ENCODE measurements at regions of chr1 and their contacts with region 1.

Region 1: GRCh38 chr1:8604041-8604945 is 213.1 kb downstream of the RERE start:
- DNase-seq: peak; percentile 73
- H3K4me3 Mint-ChIP-seq: peak overlapping the region; percentile 67
- H3K27ac Mint-ChIP-seq: peak overlapping the region; percentile 97
- H3K4me1 Mint-ChIP-seq: peaks cover 49% of the 10 kb centered on the region
- H3K27me3 Mint-ChIP-seq: no peaks in the 10 kb centered on the region

Region 2: DNA sequence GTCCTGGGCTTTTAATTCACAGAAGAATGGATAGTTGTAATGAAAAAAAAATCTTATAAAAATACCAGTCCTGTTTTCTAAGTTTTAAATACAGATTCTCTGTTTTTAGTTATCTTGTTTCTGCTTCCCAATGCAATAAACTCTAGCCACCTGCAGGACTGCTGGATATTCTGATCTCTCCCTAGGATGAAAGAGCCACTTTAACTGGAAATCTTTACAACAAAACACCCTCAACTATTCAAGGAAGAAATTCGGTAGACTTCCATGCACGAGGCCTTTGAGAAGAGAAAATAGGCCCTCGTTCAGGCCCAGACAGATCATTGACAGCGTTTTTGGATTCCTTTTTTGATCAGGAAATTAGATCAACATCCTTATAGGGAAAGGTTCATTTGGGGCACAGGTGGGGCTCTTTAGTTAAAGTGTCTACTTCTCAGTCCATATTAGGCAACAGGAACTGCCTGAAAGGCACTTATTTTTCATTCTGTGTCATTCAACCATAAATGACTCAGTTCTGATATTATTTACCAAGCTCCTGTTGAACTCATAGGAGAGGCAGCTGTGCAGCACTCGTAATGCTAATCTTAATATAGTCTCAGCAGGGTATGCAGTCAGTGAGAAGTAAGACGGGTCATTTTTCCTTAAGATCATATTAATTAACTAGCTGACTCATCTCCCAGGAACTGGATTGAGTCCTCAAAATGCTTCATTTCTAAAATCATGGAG is 507.1 kb before region 1 on chr1:
- CTCF ChIA-PET with region 1: no interaction called
- intact Hi-C with region 1: loop called (anchors 2 kb)
- DNase-seq: peak; percentile 53
- H3K4me3 Mint-ChIP-seq: no peak overlapping the region
- H3K27ac Mint-ChIP-seq: peak overlapping the region; percentile 81
- H3K4me1 Mint-ChIP-seq: peaks cover 36% of the 10 kb centered on the region
- H3K27me3 Mint-ChIP-seq: peaks cover 17% of the 10 kb centered on the region

Region 3: DNA sequence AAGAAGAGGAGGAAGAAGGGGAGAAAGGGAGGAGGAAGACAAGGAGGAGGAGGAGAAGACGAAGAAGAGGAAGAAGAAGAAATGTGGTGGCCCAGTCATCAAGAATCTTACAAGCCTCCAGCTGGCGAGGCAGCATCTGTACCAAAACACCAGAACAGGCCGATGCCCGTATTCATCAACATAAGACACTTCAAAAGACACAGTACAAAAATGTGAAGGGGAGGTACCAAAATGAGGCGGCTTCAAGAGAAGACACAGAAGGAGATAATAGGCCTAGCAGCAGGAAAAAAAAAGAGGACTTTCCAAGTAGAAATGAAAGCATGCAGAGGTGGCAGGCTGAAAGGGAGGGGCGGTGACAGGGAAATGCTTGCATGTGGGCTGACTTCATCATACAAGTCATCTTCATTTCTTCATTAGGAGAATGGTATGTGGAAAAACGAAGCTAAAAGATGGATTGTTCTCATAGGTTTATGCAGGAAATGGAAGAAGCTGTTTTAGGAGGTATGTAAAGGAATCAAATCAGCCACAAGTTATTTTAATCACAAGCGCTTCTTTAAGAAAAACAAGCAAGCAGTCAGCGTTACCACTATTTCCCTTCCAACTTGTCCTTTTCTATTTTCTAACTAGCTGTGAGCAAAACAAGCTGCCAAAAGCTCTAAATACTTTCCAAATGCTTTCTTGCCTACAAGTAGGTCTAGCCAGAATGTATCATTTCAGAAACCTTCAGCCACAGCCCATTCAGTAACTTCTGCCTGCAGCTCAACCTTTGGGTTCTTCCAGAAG is 94.1 kb before region 1 on chr1:
- CTCF ChIA-PET with region 1: no interaction called
- intact Hi-C with region 1: loop called (anchors 2 kb)
- DNase-seq: peak; percentile 81
- H3K4me3 Mint-ChIP-seq: peak overlapping the region; percentile 54
- H3K27ac Mint-ChIP-seq: peak overlapping the region; percentile 93
- H3K4me1 Mint-ChIP-seq: peaks cover 46% of the 10 kb centered on the region
- H3K27me3 Mint-ChIP-seq: no peaks in the 10 kb centered on the region

Region 4: DNA sequence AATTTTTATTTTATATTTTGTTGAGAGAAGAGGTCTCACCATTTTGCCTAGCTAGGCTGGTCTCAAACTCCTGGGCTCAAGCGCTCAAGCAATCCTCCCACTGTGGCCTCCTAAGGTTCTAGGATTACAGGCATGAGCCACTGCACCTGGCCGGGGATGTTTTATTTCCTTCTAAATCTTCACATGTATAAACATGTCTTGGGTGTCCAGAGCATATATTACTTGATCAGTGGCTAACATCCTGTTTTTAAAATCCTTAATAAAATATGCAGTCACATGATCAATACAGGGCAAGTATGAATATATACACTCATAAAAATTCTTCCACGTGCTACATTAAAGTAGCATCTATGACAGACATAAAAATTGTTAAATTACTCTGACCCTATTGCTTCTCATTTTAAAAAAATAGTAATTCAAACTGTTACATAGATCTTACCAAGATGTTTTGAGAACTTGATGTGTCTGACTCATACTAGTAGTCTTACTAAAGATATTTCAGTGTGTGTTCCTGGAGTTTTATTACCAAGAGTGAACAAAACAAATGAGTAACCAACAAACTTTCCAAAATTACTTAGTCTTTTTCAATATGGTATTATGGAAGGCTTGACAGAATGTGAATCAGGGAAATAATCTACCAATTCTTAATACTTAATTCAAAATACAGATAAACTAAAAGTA is 63.9 kb before region 1 on chr1:
- CTCF ChIA-PET with region 1: no interaction called
- intact Hi-C with region 1: loop called (anchors 1 kb)
- DNase-seq: no peak
- H3K4me3 Mint-ChIP-seq: no peak overlapping the region
- H3K27ac Mint-ChIP-seq: peak overlapping the region; percentile 56
- H3K4me1 Mint-ChIP-seq: peaks cover 32% of the 10 kb centered on the region
- H3K27me3 Mint-ChIP-seq: no peaks in the 10 kb centered on the region

Region 5: DNA sequence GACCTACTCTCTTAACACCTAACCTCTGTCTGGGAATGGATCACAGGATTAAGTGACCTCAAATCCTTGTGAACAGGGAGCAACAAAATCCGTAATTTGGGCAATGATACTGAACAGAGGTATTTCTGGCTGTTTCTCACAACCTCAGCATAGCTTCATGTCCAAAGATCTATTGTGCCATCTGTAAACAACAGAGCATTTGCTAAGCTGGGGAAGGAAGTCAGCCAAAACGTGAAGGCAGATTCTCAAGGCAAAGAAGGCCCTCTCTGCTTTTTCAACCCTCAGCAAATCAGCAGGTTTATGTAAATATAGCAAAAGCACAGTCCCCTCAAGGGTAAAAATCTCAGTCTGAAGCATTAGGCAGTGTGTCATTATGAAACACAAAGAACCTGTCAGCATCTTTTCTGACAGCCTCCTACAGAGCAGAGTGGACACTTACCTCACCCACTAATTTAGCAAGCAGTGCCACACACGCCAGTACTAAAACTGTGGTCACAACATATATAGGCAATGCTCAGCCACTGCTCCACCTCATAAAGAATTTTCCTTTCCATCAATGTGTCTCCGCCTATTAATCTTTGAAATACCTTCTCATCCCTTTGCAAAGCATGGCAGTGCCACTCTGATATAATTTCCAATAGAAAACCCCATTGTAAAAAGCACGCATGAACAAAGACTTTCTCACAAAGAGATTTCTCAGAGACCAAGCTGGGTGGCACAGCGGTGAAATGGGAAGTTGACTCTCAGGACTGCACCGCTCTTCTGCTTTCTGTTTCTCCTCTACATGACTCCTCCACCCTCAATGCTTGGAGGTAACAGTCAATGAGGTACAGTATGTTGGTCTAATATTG is 25.2 kb after region 1 on chr1:
- CTCF ChIA-PET with region 1: interaction called, 4 read pairs
- intact Hi-C with region 1: loop called (anchors 2 kb)
- DNase-seq: peak; percentile 37
- H3K4me3 Mint-ChIP-seq: no peak overlapping the region
- H3K27ac Mint-ChIP-seq: no peak overlapping the region
- H3K4me1 Mint-ChIP-seq: peaks cover 58% of the 10 kb centered on the region
- H3K27me3 Mint-ChIP-seq: no peaks in the 10 kb centered on the region

Region 6: GRCh38 chr1:8660411-8660828 is 56.1 kb after region 1 on chr1:
- CTCF ChIA-PET with region 1: no interaction called
- intact Hi-C with region 1: loop called (anchors 1 kb)
- DNase-seq: no peak
- H3K4me3 Mint-ChIP-seq: no peak overlapping the region
- H3K27ac Mint-ChIP-seq: no peak overlapping the region
- H3K4me1 Mint-ChIP-seq: peaks cover 9% of the 10 kb centered on the region
- H3K27me3 Mint-ChIP-seq: no peaks in the 10 kb centered on the region

Region 7: GRCh38 chr1:8702850-8703810 is 98.8 kb after region 1 on chr1:
- CTCF ChIA-PET with region 1: no interaction called
- intact Hi-C with region 1: loop called (anchors 1 kb)
- DNase-seq: peak; percentile 72
- H3K4me3 Mint-ChIP-seq: peak overlapping the region; percentile 84
- H3K27ac Mint-ChIP-seq: no peak overlapping the region
- H3K4me1 Mint-ChIP-seq: peaks cover 31% of the 10 kb centered on the region
- H3K27me3 Mint-ChIP-seq: peaks cover 36% of the 10 kb centered on the region

Region 8: DNA sequence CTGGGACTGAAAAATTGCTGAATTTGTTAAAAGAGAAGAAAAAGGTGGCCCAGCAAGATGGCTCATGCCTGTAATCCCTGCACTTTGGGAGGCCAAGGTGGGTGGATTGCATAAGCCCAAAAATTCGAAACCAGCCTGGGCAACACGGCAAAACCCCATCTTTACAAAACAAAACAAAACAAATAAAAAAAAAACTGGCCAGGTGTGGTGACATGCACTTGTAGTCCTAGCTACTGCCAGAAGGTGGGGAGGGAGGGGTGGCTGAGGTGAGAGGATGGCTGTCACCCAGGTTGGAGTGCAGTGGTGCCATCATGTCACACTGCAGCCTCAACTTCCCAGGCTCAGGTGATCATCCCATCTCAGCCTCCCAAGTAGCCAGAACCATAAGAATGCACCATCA is 190.3 kb after region 1 on chr1:
- CTCF ChIA-PET with region 1: no interaction called
- intact Hi-C with region 1: no loop called
- DNase-seq: peak; percentile 21
- H3K4me3 Mint-ChIP-seq: no peak overlapping the region
- H3K27ac Mint-ChIP-seq: no peak overlapping the region
- H3K4me1 Mint-ChIP-seq: peaks cover 3% of the 10 kb centered on the region
- H3K27me3 Mint-ChIP-seq: no peaks in the 10 kb centered on the region

Region 9: GRCh38 chr1:8905582-8906191 is 301.4 kb after region 1 on chr1:
- CTCF ChIA-PET with region 1: no interaction called
- intact Hi-C with region 1: no loop called
- DNase-seq: no peak
- H3K4me3 Mint-ChIP-seq: no peak overlapping the region
- H3K27ac Mint-ChIP-seq: peak overlapping the region; percentile 24
- H3K4me1 Mint-ChIP-seq: peaks cover 34% of the 10 kb centered on the region
- H3K27me3 Mint-ChIP-seq: no peaks in the 10 kb centered on the region

Region 10: DNA sequence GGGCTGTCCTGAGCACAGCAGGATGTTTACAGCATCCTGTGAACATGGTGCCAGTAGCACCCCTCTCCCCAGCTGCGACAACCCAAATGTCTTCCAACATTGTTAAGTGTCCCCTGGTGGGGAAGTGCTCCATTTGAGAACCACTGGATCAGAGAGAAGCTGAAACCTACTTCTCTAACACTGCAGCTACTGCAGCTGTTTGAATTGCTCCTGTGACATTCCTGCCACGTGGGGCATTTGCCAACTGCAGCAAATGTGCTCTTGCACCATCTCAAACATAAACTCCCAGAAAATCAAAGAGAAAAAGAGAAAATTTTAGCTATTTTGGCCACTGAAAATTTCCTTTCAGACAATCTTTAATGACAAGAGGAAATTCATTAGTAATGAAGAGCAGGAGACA is 454.2 kb after region 1 on chr1:
- CTCF ChIA-PET with region 1: no interaction called
- intact Hi-C with region 1: no loop called
- DNase-seq: no peak
- H3K4me3 Mint-ChIP-seq: no peak overlapping the region
- H3K27ac Mint-ChIP-seq: no peak overlapping the region
- H3K4me1 Mint-ChIP-seq: no peaks in the 10 kb centered on the region
- H3K27me3 Mint-ChIP-seq: no peaks in the 10 kb centered on the region